Activated CD4-positive, alpha-beta T cell treated with anti-CD3 and anti-CD28 coated beads for 36 hours (primary cell): ENCODE measurements at regions of chr6 and their contacts with region 1.

Region 1: DNA sequence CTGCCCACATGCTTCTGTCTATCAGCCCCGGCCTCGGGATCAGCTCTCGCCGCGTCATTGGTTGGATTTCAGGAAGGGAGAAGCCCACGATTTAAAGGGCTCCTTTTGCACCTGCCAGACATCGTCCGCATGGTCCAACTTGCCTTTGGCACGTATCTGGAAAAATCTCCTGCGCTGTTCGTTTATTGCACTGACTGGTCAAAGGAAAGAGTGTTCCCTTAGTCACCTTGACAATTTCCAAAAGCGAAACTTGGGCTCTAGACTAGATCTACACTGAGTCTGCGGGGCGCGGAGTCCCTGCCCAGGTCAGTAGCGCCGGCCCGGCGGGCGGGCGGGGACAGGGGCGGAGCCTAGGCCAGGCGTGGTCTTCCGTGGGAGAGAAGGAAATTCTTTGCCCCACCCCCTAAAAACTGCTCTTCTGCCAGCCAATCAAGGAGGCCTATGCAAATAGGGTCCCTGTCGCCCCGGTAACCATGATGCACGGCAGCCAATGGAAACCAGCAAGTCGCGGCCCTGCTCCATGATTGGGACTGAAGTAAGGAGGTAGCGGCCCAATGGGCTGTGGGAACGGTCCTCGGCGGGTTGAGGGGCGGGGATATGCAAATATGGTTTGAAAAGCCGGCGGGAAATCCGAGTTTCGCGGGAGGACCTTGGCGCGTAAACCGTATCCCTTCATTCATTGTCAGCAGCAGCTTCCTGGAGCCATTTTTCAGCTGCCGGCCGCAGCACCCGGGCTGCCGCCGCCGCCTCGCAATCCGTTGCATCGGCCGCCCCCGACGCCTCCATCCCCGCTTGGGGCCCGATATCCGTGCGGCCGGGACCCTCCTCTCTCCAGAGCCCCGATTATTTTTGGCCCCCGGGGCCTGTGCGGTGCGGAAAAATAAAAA is at the start of gene E2F3:
- DNase-seq: peak; percentile 99
- ATAC-seq: peak; percentile 84
- H3K4me3 Mint-ChIP-seq: peak within 1 kb of the TSS; percentile 96
- H3K27ac Mint-ChIP-seq: peak within 1 kb of the TSS; percentile 99
- H3K4me1 Mint-ChIP-seq: peaks cover 28% of the 10 kb centered on the region
- H3K27me3 Mint-ChIP-seq: no peaks in the 10 kb centered on the region
- total RNA-seq, gene E2F3: 17.3 to 17.5 TPM

Region 2: DNA sequence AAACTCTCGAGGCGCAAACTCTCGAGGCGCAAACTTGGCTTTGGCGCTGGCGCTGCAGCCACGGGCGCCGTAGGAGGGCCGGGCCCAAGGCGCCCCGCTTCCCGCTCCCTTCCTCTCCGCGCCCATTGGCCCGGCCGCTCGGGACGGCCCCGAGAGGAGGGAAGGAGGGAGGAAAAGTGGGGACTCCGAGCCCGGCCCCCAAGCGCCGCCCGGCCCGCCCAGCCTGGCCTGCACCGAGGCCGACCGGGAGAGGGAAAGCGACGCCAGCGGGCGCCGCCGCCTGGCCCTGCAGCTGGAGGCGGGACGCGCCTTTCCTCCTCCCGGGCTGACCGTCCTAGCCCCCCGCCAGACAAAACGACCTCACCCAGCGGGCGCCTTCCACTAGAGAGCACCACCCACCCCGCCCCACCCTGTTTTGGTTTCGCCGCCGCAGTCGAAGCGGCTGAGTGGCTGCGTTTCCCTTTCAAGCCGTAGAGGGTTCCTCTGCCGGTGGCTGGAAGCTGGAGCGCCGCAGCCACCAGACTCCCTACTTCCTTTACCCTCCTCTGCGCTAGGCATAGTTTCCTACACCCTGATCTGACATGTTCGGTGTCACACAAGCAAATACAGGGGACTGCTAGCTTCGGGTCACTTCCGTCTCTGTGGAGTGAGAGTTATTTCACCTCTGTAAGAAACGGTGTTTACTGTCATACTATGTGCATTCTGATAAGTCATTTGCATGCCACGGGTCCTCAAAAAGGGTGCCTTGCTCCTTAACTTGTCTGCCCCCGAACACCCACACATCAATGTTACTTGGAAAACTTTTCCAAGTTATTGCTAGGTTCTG is 188.8 kb before region 1 on chr6 and contains the start of gene MBOAT1:
- CTCF ChIA-PET with region 1: interaction called, 3 read pairs
- POLR2A ChIA-PET with region 1: no interaction called
- intact Hi-C with region 1: loop called (anchors 1 to 2 kb)
- DNase-seq: peak; percentile 85
- ATAC-seq: peak; percentile 89
- H3K4me3 Mint-ChIP-seq: peak within 1 kb of the TSS; percentile 95
- H3K27ac Mint-ChIP-seq: peak within 1 kb of the TSS; percentile 97
- H3K4me1 Mint-ChIP-seq: peaks cover 37% of the 10 kb centered on the region
- H3K27me3 Mint-ChIP-seq: no peaks in the 10 kb centered on the region
- total RNA-seq, gene MBOAT1: 13.3 to 16.1 TPM

Region 3: DNA sequence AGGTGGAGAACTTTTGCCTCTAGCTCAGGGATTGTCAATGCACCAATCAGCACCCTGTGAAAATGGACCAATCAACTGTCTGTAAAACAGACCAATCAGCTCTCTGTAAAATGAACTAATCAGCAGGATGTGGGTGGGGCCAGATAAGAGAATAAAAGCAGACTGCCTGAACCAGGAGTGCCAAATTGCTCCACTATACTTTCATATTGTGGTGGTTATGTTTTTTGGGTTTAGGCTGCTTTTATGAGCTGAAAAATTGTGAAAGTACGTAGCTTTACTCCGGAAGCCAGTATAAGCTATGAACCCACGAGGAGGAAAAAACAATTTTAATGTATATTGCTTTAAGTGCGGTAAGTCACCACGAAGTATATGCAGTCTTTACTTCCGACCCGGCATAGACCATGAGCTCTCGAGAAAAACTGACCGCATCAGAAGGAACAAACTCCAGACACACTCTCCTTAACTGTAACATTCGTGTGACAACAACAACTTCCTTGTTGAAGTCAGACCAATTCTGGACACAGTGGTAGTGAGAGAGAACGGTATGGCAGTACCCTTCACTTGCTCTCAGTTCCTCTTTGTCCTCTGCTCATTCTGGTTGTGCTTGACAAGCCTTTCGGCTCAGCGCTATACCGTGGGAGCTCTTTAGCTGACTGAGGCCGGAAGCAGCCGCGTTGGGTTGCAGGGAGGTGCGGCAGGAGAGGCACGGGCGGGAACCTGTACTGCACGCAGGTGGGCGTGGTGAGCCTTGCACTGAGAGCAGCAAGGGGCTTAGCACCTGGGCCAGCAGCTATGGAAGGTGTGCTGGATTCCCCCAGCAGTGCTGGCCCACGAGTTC is 81.7 kb before region 1 on chr6:
- CTCF ChIA-PET with region 1: interaction called, 14 read pairs
- POLR2A ChIA-PET with region 1: interaction called, 11 read pairs
- intact Hi-C with region 1: loop called (anchors 1 to 2 kb)
- DNase-seq: peak; percentile 86
- ATAC-seq: peak; percentile 96
- H3K4me3 Mint-ChIP-seq: peak overlapping the region; percentile 78
- H3K27ac Mint-ChIP-seq: peak overlapping the region; percentile 96
- H3K4me1 Mint-ChIP-seq: peaks cover 11% of the 10 kb centered on the region
- H3K27me3 Mint-ChIP-seq: no peaks in the 10 kb centered on the region

Region 4: GRCh38 chr6:20417819-20418218 is 16.4 kb after region 1 on chr6:
- CTCF ChIA-PET with region 1: interaction called, 21 read pairs
- POLR2A ChIA-PET with region 1: no interaction called
- intact Hi-C with region 1: no loop called
- DNase-seq: no peak
- ATAC-seq: no peak
- H3K4me3 Mint-ChIP-seq: no peak overlapping the region
- H3K27ac Mint-ChIP-seq: peak overlapping the region; percentile 53
- H3K4me1 Mint-ChIP-seq: peaks cover 47% of the 10 kb centered on the region
- H3K27me3 Mint-ChIP-seq: no peaks in the 10 kb centered on the region

Region 5: DNA sequence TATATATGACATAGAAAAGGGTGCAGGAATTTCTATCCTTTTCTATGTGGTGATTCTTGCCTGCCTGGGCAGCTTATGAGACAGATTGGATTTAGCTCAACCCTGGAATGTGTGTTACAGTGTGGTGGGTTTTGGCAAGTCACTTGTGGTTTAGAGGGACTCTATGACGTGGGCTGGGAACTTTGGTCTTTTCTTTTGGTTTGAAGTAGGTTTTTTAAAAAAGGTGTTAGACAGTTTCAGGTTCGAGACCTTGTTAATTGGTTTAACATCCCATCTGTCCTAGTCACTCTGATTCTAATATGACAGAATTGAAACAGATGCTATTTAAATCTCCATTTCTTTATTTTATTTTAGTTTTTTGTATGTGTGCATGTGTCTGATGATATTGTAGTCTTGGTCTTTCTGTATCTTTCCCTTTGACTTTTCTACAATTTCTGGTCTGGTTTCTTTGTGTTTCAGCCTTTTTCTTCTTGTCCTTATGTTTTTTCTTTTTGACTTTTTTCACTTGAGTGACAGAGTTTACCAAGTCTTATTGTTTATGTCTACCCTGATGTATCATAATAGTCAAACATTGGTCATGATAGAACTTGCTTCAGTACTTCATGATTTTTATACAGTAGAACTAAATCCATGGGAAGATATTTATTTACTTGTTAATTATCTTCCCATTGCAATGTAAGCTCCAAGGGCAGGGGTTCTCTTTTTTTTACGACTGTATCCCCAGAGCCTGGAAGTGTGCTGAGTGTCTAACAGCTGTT is 307.1 kb after region 1 on chr6:
- CTCF ChIA-PET with region 1: no interaction called
- POLR2A ChIA-PET with region 1: no interaction called
- intact Hi-C with region 1: loop called in 1 of 2 experiments (anchors 5 kb)
- DNase-seq: peak; percentile 49
- ATAC-seq: peak; percentile 43
- H3K4me3 Mint-ChIP-seq: no peak overlapping the region
- H3K27ac Mint-ChIP-seq: peak overlapping the region; percentile 23
- H3K4me1 Mint-ChIP-seq: peaks cover 55% of the 10 kb centered on the region
- H3K27me3 Mint-ChIP-seq: no peaks in the 10 kb centered on the region